Upper lobe of right lung (tissue), 1 donor: ENCODE measurements at regions of chr12 and their contacts with region 1.

Region 1: DNA sequence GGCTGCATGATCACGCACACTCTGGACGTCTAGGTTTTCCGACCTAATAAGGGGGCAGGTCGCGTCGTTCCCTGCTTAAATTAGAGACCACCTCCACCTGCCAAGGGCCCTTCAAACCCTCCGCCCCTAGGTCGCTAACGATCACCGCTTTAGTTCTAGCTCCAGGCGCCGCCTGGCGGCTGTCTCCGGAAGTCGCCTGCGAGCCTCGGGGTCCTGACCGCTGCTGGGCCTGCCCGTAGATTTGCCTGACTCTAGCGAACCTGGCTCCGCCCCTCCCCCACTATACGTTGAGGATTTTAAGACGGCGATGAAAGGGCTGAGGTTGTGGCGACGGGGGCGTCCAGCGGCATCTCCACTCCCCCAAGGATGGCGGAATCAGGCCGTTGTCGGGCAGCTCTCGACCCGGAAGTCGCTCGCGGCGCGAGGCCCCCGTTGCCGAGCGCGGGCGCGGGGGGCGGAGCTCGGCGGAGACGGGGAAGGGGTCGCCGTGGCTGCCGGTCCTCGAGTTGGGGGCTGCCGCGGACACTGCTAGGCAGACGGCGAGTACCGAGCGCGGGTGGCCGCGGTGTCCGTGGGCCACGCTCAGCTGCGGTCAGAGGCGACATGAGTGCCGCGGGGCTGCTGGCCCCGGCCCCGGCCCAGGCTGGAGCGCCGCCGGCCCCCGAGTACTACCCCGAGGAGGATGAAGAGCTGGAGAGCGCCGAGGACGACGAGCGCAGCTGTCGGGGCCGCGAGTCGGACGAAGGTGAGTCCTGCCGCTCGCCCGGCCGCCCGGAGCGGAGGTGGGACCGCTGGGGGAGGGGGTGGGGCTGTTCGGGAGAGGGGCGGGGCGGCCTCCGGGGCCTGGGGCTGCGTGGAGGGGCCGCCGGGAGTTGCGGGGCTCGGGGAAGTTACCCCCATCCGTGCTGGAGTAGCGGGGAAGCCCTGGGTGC is at the start of gene SUDS3:
- DNase-seq: peak; percentile 95
- ATAC-seq: peak; percentile 74
- H3K4me3 ChIP-seq: peak within 1 kb of the TSS; percentile 84
- H3K27ac ChIP-seq: peak within 1 kb of the TSS; percentile 97
- H3K4me1 ChIP-seq: peaks cover 31% of the 10 kb centered on the region
- H3K27me3 ChIP-seq: no peaks in the 10 kb centered on the region
- CTCF ChIP-seq: peak; percentile 97
- total RNA-seq, gene SUDS3: 28.8 TPM

Region 2: GRCh38 chr12:118183705-118184104 is 192.7 kb before region 1 on chr12:
- intact Hi-C with region 1: loop called (anchors 5 kb)
- DNase-seq: no peak
- ATAC-seq: no peak
- H3K4me3 ChIP-seq: no peak overlapping the region
- H3K27ac ChIP-seq: no peak overlapping the region
- H3K4me1 ChIP-seq: peaks cover 11% of the 10 kb centered on the region
- H3K27me3 ChIP-seq: no peaks in the 10 kb centered on the region
- CTCF ChIP-seq: no peak

Region 3: DNA sequence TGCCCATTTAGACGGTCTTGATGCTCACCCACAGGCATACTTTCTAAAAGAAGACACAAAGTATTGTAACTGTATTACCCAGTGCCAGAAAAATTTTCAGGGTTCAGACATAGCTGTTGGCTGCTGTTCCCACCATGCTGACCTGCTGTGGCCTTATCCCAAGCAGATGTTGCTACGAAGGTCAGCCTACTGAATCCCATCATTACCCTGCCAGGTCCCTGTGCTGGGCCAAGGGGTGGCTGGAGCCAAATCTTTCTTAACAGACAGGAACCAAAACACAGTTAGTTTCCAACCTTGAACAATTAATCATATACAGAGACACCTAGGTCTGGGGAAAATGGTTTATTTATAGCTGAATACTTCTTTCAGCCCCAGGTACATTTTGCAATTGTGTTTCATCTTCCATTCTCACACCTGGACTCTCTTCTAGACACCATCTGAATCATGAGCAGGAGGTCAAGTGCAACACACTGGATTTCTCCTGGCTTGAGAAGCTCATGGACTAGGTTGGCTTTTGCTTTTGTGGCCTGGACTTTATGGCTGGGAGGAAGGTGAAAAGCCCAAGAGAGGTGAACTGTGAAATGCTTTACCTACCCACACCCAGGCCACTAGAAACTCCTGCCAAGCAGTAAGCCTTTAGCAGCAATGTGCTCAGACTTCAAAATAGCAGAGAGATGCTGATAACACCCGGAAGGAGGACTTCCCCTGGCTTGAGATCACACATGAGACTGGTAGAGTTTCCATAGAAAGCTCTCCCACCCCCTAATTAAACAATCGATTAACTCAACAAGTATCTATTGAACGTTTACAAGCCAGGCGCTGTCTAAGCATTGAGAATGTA is 150.1 kb after region 1 on chr12:
- intact Hi-C with region 1: no loop called
- DNase-seq: no peak
- ATAC-seq: no peak
- H3K4me3 ChIP-seq: no peak overlapping the region
- H3K27ac ChIP-seq: no peak overlapping the region
- H3K4me1 ChIP-seq: no peaks in the 10 kb centered on the region
- H3K27me3 ChIP-seq: no peaks in the 10 kb centered on the region
- CTCF ChIP-seq: no peak